B cell (primary cell): ENCODE measurements at regions of chr19 and their contacts with region 1.

Region 1: DNA sequence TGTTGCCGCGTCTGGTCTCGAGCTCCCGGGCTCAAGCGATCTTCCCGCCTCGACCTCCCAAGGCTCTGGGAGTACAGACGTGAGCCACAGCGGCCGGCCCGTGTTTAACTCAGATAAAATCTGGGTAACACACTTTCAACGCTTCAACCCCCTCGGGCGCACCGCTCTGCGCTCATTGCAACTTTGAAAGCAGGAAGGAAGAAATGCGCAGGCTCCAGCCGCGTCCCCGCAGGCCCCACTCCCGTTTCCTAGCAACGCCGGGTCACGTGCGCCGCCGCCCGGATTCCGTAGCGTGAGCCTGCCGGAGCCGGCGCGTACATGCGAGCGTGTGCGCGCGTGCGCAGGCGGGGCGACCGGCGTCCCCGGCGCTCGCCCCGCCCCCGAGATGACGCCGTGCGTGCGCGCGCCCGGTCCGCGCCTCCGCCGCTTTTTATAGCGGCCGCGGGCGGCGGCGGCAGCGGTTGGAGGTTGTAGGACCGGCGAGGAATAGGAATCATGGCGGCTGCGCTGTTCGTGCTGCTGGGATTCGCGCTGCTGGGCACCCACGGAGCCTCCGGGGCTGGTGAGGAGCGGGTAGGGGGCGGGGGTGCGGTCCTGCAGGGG is at the start of gene BSG:
- DNase-seq: peak; percentile 99
- ATAC-seq: peak; percentile 78
- H3K4me3 ChIP-seq: peak within 1 kb of the TSS; percentile 69 to 89 (median 81)
- H3K4me3 Mint-ChIP-seq: peak within 1 kb of the TSS; percentile 99
- H3K27ac ChIP-seq: peak within 1 kb of the TSS; percentile 85 to 89
- H3K27ac Mint-ChIP-seq: peak within 1 kb of the TSS; percentile 99
- H3K4me1 ChIP-seq: peaks cover 19 to 33% of the 10 kb centered on the region in 2 donors
- H3K4me1 Mint-ChIP-seq: peaks cover 35% of the 10 kb centered on the region
- H3K27me3 ChIP-seq: no peaks in the 10 kb centered on the region
- H3K27me3 Mint-ChIP-seq: no peaks in the 10 kb centered on the region
- CTCF ChIP-seq: no peak
- total RNA-seq, gene BSG: 131 and 144 TPM in 2 replicates

Region 2: DNA sequence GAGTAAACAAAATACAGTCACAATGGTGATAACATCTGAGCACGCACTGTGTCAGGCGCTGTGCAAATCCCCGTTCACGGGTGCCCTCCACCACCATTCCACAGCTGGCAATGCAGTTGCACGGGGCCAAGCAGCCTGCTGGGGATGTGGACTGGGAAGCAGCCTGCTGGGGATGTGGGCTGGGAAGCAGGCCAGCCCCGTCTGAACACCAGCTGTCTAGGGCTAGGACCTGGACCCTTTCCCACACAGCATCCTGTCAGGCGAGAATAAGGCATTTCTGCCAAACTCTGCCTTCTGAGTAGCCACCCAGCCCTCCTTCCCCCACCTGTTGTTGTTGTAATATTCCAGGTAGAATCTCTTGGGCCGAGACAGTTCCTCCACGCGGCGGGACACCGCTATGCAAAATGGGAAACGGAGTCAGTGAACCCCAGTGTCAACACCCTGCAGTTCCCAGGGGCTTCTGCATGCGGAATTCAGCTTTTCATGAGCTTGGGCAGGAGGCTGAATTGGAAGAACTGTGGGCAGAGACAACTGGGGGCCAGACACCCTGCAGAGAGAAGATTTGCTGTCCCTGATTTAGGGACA is 199.8 kb before region 1 on chr19:
- CTCF ChIA-PET with region 1: no interaction called
- POLR2A ChIA-PET with region 1: no interaction called
- intact Hi-C with region 1: no loop called
- DNase-seq: no peak
- ATAC-seq: no peak
- H3K4me3 ChIP-seq: no peak overlapping the region
- H3K4me3 Mint-ChIP-seq: no peak overlapping the region
- H3K27ac ChIP-seq: no peak overlapping the region
- H3K27ac Mint-ChIP-seq: no peak overlapping the region
- H3K4me1 ChIP-seq: no peaks in the 10 kb centered on the region
- H3K4me1 Mint-ChIP-seq: no peaks in the 10 kb centered on the region
- H3K27me3 ChIP-seq: peaks cover 0 to 9% (median 0%) of the 10 kb centered on the region in 4 experiments
- H3K27me3 Mint-ChIP-seq: peaks cover 27% of the 10 kb centered on the region
- CTCF ChIP-seq: no peak

Region 3: GRCh38 chr19:531009-531752 is 41.1 kb before region 1 on chr19:
- CTCF ChIA-PET with region 1: no interaction called
- POLR2A ChIA-PET with region 1: interaction called, 3 read pairs
- intact Hi-C with region 1: loop called (anchors 1 kb)
- DNase-seq: peak; percentile 94
- ATAC-seq: peak; percentile 80
- H3K4me3 ChIP-seq: peak overlapping the region in 4 of 5 experiments; percentile 73 to 83 (median 76)
- H3K4me3 Mint-ChIP-seq: peak overlapping the region; percentile 89
- H3K27ac ChIP-seq: peak overlapping the region; percentile 41 to 79
- H3K27ac Mint-ChIP-seq: peak overlapping the region; percentile 88
- H3K4me1 ChIP-seq: peaks cover 12 to 25% of the 10 kb centered on the region in 2 donors
- H3K4me1 Mint-ChIP-seq: peaks cover 13% of the 10 kb centered on the region
- H3K27me3 ChIP-seq: no peaks in the 10 kb centered on the region
- H3K27me3 Mint-ChIP-seq: peaks cover 6% of the 10 kb centered on the region
- CTCF ChIP-seq: no peak

Region 4: GRCh38 chr19:542173-542866 is 29.9 kb before region 1 on chr19:
- CTCF ChIA-PET with region 1: no interaction called
- POLR2A ChIA-PET with region 1: no interaction called
- intact Hi-C with region 1: no loop called
- DNase-seq: peak; percentile 10
- ATAC-seq: no peak
- H3K4me3 ChIP-seq: no peak overlapping the region
- H3K4me3 Mint-ChIP-seq: no peak overlapping the region
- H3K27ac ChIP-seq: no peak overlapping the region
- H3K27ac Mint-ChIP-seq: no peak overlapping the region
- H3K4me1 ChIP-seq: no peaks in the 10 kb centered on the region
- H3K4me1 Mint-ChIP-seq: no peaks in the 10 kb centered on the region
- H3K27me3 ChIP-seq: no peaks in the 10 kb centered on the region
- H3K27me3 Mint-ChIP-seq: no peaks in the 10 kb centered on the region
- CTCF ChIP-seq: no peak

Region 5: DNA sequence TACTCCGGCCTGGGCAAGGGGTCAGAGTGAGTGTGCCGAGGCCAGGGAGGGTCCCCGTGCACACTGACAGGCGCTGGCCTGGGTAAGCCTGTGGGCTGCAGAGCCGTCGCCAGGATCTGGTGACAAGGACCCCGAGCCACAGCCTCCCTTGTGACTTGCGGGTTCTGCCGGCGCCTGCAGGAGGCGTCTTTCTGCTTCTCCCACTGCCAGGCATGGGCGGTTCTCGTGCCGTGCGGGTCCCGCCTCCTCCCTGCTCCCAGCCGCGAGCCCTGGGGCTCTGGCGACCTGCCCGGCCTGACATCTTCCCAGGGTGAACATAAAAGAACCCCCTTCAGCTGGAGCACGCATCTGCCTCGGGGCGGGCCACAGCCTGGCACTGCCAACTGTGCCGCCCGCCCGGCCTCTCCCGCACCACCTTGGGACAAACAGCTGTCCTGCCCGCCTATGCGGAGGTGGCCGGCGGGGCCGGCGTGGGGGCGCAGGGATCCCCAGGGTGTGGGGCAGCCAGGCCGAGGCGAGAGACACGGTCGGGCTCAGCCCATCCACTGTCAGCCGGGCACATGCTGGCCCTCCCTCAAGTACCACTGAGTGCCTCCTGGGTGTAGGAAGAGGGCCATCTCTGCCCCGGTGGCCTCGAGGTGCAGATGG is 16.0 kb after region 1 on chr19:
- CTCF ChIA-PET with region 1: interaction called, 12 read pairs
- POLR2A ChIA-PET with region 1: no interaction called
- intact Hi-C with region 1: loop called (anchors 2 kb)
- DNase-seq: peak; percentile 65
- ATAC-seq: peak; percentile 21
- H3K4me3 ChIP-seq: no peak overlapping the region
- H3K4me3 Mint-ChIP-seq: peak overlapping the region; percentile 41
- H3K27ac ChIP-seq: no peak overlapping the region
- H3K27ac Mint-ChIP-seq: no peak overlapping the region
- H3K4me1 ChIP-seq: peaks cover 17% of the 10 kb centered on the region in 2 donors
- H3K4me1 Mint-ChIP-seq: peaks cover 15% of the 10 kb centered on the region
- H3K27me3 ChIP-seq: peaks cover 0 to 53% (median 21%) of the 10 kb centered on the region in 4 experiments
- H3K27me3 Mint-ChIP-seq: peaks cover 16% of the 10 kb centered on the region
- CTCF ChIP-seq: peak; percentile 51

Region 6: GRCh38 chr19:633068-633785 is 61.0 kb after region 1 on chr19 and contains the start of gene POLRMT:
- CTCF ChIA-PET with region 1: no interaction called
- POLR2A ChIA-PET with region 1: no interaction called
- intact Hi-C with region 1: loop called (anchors 1 kb)
- DNase-seq: peak; percentile 99
- ATAC-seq: peak; percentile 96
- H3K4me3 ChIP-seq: peak within 1 kb of the TSS; percentile 72 to 93 (median 81)
- H3K4me3 Mint-ChIP-seq: peak within 1 kb of the TSS; percentile 91
- H3K27ac ChIP-seq: peak within 1 kb of the TSS; percentile 52 to 75
- H3K27ac Mint-ChIP-seq: peak within 1 kb of the TSS; percentile 89
- H3K4me1 ChIP-seq: peaks cover 14 to 41% of the 10 kb centered on the region in 2 donors
- H3K4me1 Mint-ChIP-seq: peaks cover 34% of the 10 kb centered on the region
- H3K27me3 ChIP-seq: peaks cover 0 to 2% (median 0%) of the 10 kb centered on the region in 4 experiments
- H3K27me3 Mint-ChIP-seq: no peaks in the 10 kb centered on the region
- CTCF ChIP-seq: no peak
- total RNA-seq, gene POLRMT: 73.2 and 77.8 TPM in 2 replicates

Region 7: DNA sequence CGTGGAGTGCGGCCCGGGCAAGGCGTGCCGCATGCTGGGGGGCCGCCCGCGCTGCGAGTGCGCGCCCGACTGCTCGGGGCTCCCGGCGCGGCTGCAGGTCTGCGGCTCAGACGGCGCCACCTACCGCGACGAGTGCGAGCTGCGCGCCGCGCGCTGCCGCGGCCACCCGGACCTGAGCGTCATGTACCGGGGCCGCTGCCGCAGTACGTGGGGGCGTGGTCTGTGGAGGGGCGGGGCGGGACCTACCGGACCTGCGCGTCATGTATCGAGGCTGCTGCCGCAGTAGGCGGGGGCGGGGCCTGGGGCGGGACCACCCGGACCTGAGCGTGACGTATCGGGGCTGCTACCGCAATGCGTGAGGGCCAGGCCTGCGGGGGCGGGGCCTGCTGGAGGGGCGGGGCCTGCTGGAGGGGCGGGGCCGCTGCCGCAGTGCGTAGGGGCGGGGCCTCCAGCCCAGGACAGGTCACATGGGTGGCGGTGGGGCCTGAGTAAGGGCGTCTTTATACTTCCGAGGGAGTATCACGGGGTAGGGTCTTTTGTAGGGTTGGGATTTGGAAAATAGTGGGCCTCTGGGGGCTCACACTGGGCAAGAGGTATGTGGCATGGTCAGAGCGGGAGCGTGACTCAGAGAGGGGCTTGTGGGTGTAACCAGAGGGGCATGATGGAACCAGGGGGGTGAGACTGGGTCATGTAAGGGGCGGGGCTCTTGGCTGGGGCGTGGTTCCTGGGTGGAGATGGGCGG is 108.2 kb after region 1 on chr19:
- CTCF ChIA-PET with region 1: no interaction called
- POLR2A ChIA-PET with region 1: interaction called, 3 read pairs
- intact Hi-C with region 1: loop called (anchors 1 kb)
- DNase-seq: peak; percentile 99
- ATAC-seq: peak; percentile 84
- H3K4me3 ChIP-seq: peak overlapping the region; percentile 53 to 91 (median 60)
- H3K4me3 Mint-ChIP-seq: peak overlapping the region; percentile 96
- H3K27ac ChIP-seq: peak overlapping the region; percentile 81 to 89
- H3K27ac Mint-ChIP-seq: peak overlapping the region; percentile 98
- H3K4me1 ChIP-seq: peaks cover 11 to 26% of the 10 kb centered on the region in 2 donors
- H3K4me1 Mint-ChIP-seq: peaks cover 9% of the 10 kb centered on the region
- H3K27me3 ChIP-seq: peaks cover 0 to 20% (median 6%) of the 10 kb centered on the region in 4 experiments
- H3K27me3 Mint-ChIP-seq: peaks cover 1% of the 10 kb centered on the region
- CTCF ChIP-seq: peak; percentile 56